ENCODE measurements at regions of chr12 and their contacts with region 1.

Region 1: DNA sequence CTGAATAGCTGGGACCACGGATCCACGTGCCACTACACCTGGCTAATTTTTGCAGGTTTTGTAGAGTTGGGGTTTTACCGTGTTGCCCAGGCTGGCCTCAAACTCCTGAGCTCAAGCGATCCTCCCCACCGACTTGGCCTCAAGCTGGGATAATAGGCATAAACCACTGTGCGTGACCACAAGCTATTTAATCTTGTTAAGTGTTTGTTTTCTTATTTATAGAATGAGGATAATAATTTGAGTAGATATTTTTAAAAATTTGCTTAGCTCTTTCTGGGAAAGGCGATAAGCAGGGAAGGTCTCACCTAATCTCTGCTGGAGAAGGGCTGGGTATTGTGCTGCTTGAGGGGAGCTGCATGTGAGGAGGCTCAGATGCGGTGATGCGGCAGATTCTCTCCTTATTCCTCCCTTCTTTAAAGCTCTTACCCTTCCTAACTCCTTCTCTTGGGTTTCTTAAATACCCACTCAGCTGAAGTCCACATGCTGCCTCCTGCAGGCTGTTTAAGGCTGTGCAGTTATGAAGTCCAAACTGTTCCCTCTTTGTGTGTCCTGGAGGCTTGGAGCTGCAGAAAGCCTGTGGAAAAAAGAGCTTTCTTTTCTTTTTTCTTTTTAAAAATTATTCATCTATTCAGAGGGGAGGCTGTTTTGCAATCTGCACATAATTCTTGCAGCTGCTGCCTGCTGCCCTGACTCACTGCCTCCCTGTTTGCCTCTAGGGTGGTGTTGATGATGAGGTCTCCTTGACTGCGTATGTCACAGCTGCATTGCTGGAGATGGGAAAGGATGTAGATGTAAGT is 37.9 kb downstream of the A2ML1 start:
- DNase-seq: peak in 4 of 5 donors; percentile 18 to 28 (median 25)
- H3K4me3 ChIP-seq: no peak overlapping the region
- H3K4me3 Mint-ChIP-seq: no peak overlapping the region
- H3K27ac ChIP-seq: no peak overlapping the region
- H3K27ac Mint-ChIP-seq: no peak overlapping the region
- H3K4me1 ChIP-seq: no peaks in the 10 kb centered on the region
- H3K4me1 Mint-ChIP-seq: no peaks in the 10 kb centered on the region
- H3K27me3 ChIP-seq: no peaks in the 10 kb centered on the region
- H3K27me3 Mint-ChIP-seq: peaks cover 0 to 4% of the 10 kb centered on the region in 2 donors

Region 2: GRCh38 chr12:8662593-8662992 is 197.8 kb before region 1 on chr12 and contains the start of gene MFAP5:
- CTCF ChIA-PET with region 1: interaction called, 30 read pairs
- POLR2A ChIA-PET with region 1: no interaction called
- intact Hi-C with region 1: no loop called
- DNase-seq: no peak
- H3K4me3 ChIP-seq: no peak within 1 kb of the TSS
- H3K4me3 Mint-ChIP-seq: no peak within 1 kb of the TSS
- H3K27ac ChIP-seq: no peak within 1 kb of the TSS
- H3K27ac Mint-ChIP-seq: no peak within 1 kb of the TSS
- H3K4me1 ChIP-seq: no peaks in the 10 kb centered on the region
- H3K4me1 Mint-ChIP-seq: no peaks in the 10 kb centered on the region
- H3K27me3 ChIP-seq: no peaks in the 10 kb centered on the region
- H3K27me3 Mint-ChIP-seq: peaks cover 5% of the 10 kb centered on the region in 2 donors
- total RNA-seq, gene MFAP5: not detected

Region 3: DNA sequence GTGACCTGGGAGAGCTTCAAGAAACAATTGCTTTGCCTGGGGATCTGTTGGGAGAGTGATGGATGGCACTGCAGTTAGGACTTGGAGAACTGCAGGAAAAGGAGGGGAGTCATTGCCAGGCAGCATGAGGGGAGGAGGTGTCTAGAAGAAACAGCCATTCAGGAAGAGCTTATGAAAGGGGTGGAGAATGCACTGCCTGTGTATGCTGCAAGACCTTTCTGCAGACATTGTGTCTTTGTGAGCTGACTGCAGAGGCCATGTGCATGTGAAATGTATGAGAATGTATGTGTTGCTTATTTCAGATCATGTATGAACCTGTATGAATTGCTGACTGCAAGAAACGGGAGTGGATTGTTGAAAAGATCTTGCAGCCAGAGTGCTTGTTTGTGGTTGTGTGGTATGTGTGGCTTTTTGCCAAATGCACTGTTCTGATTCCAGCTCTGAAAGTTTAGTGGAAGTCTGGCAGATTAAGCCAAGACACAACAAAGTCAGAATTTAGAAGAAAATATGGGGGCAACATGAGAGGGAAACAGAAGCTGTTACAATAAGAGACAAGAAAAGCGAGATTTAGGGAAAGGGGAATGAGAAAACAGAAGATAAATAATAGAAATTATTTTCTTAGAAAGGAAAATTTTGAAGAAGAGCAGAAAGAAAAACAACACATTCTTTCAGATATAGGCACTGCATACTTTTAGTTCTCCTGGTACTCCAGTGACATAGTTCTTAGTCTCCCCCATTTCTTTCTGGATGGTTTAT is 172.3 kb before region 1 on chr12:
- CTCF ChIA-PET with region 1: interaction called, 56 read pairs
- POLR2A ChIA-PET with region 1: no interaction called
- intact Hi-C with region 1: no loop called
- DNase-seq: peak in 1 of 5 donors; percentile 1
- H3K4me3 ChIP-seq: no peak overlapping the region
- H3K4me3 Mint-ChIP-seq: no peak overlapping the region
- H3K27ac ChIP-seq: no peak overlapping the region
- H3K27ac Mint-ChIP-seq: no peak overlapping the region
- H3K4me1 ChIP-seq: peaks cover 7% of the 10 kb centered on the region
- H3K4me1 Mint-ChIP-seq: peaks cover 0 to 7% (median 2%) of the 10 kb centered on the region in 4 donors
- H3K27me3 ChIP-seq: no peaks in the 10 kb centered on the region
- H3K27me3 Mint-ChIP-seq: peaks cover 0 to 1% of the 10 kb centered on the region in 2 donors